ENCODE measurements at regions of chr12 and their contacts with region 1.

Region 1: DNA sequence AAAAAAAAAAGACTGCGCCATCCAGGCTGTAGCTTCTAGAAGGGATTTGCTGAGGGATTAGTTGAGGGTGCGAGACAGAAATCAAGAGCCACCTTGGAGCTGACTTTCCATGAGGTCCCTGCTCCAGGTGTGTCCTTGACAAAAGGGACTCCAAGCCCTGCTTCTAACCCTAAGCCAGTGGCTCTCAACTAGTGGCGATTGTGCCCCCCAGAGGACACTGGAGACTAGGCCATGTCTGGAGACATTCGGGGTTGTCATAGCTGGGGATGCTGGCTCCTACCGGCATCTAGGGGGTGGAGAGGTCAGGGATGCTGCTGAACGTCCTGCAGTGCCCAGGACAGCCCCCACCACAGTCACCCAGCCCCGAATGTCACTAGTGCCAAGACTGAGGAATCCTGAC is 40.6 kb downstream of the SPRING1 start:
- DNase-seq: peak in 2 of 5 donors; percentile 37 to 45
- ATAC-seq: peak in 3 of 4 donors; percentile 10 to 53 (median 16)
- H3K4me3 ChIP-seq: no peak overlapping the region
- H3K27ac ChIP-seq: no peak overlapping the region
- H3K4me1 ChIP-seq: peaks cover 0 to 43% (median 24%) of the 10 kb centered on the region in 12 donors
- H3K27me3 ChIP-seq: peaks cover 0 to 28% (median 8%) of the 10 kb centered on the region in 9 donors
- CTCF ChIP-seq: peak in 10 of 12 donors; percentile 6 to 47 (median 26)
- POLR2A ChIP-seq: no peak

Region 2: GRCh38 chr12:115998119-115998633 is 699.1 kb before region 1 on chr12:
- intact Hi-C with region 1: loop called in 1 of 10 experiments (anchors 5 kb)
- DNase-seq: no peak
- ATAC-seq: peak in 2 of 4 donors; percentile 39 to 53
- H3K4me3 ChIP-seq: no peak overlapping the region
- H3K27ac ChIP-seq: peak overlapping the region in 2 of 12 donors; percentile 1 to 11
- H3K4me1 ChIP-seq: peaks cover 0 to 13% (median 3%) of the 10 kb centered on the region in 12 donors
- H3K27me3 ChIP-seq: no peaks in the 10 kb centered on the region
- CTCF ChIP-seq: peak; percentile 76 to 97 (median 86)
- POLR2A ChIP-seq: no peak

Region 3: DNA sequence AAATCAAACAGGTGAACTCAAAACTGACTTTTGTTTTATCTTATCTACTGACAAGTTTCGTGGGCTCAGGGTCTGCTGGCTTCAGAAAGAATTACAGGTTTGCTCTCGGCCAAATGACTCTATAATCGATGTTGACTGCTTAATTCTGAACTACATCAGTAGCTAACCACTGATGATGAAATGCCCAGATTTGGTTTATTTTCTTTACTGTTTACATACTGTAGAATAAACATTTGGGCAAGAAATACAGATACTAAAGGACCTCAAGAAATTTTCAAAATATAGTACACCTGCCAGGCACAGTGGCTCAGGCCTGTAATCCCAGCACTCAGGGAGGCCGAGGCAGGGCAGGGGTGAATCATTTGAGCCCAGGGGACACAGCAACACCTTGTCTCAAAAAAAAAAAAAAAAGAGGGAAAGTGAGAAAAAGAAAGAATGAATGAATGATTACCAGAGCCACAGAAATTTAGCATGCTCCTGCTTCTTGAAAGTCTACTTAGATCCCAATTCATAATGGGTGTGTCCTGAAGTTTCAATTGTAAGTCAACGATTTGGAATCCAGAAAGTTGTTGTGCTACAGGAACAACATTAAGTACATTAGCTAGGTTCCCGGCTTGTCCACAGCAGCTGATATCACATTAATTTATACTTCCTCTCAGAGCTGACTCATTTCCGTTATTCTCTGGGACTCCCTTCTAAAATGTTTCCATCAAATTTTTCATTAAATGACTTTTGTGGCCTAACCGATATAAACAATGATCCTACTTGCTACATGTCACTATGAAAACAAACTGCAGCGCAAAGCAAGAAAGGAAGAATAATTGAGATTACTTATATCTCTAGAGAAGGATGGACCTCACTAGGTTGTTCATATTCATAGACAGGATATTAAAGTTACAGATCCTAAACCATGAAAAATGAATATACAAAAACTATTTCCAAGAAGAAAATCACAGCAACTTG is 554.1 kb before region 1 on chr12:
- intact Hi-C with region 1: loop called in 1 of 10 experiments (anchors 10 kb)
- DNase-seq: no peak
- ATAC-seq: peak in 2 of 4 donors; percentile 27 to 29
- H3K4me3 ChIP-seq: no peak overlapping the region
- H3K27ac ChIP-seq: peak overlapping the region in 7 of 12 donors; percentile 1 to 60 (median 31)
- H3K4me1 ChIP-seq: peaks cover 4 to 79% (median 52%) of the 10 kb centered on the region in 12 donors
- H3K27me3 ChIP-seq: no peaks in the 10 kb centered on the region
- CTCF ChIP-seq: no peak
- POLR2A ChIP-seq: no peak

Region 4: DNA sequence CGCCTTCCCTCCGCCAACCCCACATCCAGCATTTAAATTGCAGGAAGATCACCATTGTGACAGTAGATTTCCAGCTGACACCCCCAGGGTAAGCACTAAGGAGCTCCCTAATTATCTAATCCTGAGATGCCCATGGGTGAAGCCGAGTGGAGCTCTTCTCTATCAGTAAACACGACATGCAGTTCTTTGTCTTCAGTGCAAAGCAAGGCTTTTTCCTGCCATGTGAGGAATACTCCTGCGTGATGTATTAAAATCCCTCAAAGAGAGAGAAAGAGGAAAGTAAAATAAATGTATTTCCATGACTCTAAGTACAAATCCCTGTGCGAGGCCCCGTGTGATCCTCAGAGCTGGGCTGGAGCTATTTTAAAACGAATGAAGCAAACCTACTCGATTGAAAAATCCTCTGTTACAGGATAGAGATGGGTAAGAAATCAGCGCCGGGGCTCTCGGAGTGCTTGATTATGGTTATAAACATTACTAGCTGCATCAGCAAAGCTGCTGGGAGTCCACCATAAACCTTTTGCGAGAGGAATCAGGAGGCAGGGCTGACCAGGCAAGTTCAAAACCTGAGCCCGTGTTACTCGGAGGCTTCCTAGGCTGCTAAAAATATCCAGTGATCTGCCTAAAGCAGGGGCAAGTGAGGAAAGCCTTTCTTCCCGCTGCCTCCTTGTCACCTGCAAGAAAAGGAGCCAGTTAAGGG is 76.7 kb before region 1 on chr12:
- intact Hi-C with region 1: loop called in 1 of 10 experiments (anchors 10 kb)
- DNase-seq: no peak
- ATAC-seq: peak in 2 of 4 donors; percentile 39 to 43
- H3K4me3 ChIP-seq: no peak overlapping the region
- H3K27ac ChIP-seq: peak overlapping the region in 2 of 12 donors; percentile 12 to 61
- H3K4me1 ChIP-seq: peaks cover 0 to 19% (median 2%) of the 10 kb centered on the region in 12 donors
- H3K27me3 ChIP-seq: no peaks in the 10 kb centered on the region
- CTCF ChIP-seq: no peak
- POLR2A ChIP-seq: no peak

Region 5: GRCh38 chr12:117047810-117048584 is 350.7 kb after region 1 on chr12:
- intact Hi-C with region 1: no loop called
- DNase-seq: peak; percentile 73 to 86 (median 77)
- ATAC-seq: peak; percentile 19 to 61 (median 25)
- H3K4me3 ChIP-seq: no peak overlapping the region
- H3K27ac ChIP-seq: peak overlapping the region; percentile 38 to 99 (median 90)
- H3K4me1 ChIP-seq: peaks cover 5 to 82% (median 59%) of the 10 kb centered on the region in 12 donors
- H3K27me3 ChIP-seq: no peaks in the 10 kb centered on the region
- CTCF ChIP-seq: no peak
- POLR2A ChIP-seq: no peak